Activated CD8-positive, alpha-beta T cell treated with anti-CD3 and anti-CD28 coated beads, Interleukin-2, amount 10 ng/mL, durations not matched to agents 7 days and 5 days (primary cell): ENCODE measurements at regions of chr20 and their contacts with region 1.

Region 1: DNA sequence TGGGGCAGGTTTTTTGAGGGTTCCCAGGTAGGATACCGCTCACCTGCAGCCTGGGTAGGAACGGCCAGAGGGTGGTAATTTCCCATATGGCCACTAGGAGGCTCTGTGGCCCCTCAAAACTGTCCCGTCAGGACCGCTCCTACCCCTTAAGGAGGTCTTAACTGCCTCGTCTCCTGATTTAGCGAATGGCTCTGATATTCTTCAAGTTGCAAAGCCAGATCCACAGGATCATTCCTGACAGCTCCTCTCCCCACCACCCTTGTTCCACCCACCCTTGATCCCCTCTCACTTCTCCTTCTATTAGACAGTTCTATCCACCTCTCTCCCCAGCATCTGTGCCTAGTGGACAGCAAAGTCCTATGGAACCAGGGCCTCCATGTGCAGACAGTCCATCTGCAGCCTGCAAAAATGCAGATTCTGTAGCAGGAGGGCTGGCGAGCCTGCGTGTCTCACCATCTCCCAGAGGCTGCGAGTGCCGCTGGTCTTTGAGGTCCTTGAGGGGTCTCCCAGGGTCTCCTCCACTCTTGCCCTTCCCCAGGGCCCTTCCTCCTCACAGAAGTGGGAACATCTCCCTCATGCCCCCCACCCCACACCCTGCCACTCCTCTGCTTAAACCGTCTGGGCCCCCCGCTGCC is 34.3 kb upstream of the ZBP1 start:
- DNase-seq: peak; percentile 75
- ATAC-seq: peak; percentile 72
- H3K4me3 Mint-ChIP-seq: no peak overlapping the region
- H3K27ac Mint-ChIP-seq: no peak overlapping the region
- H3K4me1 Mint-ChIP-seq: peaks cover 30% of the 10 kb centered on the region
- H3K27me3 Mint-ChIP-seq: peaks cover 4% of the 10 kb centered on the region

Region 2: GRCh38 chr20:57628047-57628961 is 26.2 kb before region 1 on chr20:
- CTCF ChIA-PET with region 1: interaction called, 75 read pairs
- POLR2A ChIA-PET with region 1: no interaction called
- DNase-seq: peak; percentile 77
- ATAC-seq: peak; percentile 90
- H3K4me3 Mint-ChIP-seq: peak overlapping the region; percentile 55
- H3K27ac Mint-ChIP-seq: peak overlapping the region; percentile 95
- H3K4me1 Mint-ChIP-seq: peaks cover 56% of the 10 kb centered on the region
- H3K27me3 Mint-ChIP-seq: peaks cover 18% of the 10 kb centered on the region

Region 3: DNA sequence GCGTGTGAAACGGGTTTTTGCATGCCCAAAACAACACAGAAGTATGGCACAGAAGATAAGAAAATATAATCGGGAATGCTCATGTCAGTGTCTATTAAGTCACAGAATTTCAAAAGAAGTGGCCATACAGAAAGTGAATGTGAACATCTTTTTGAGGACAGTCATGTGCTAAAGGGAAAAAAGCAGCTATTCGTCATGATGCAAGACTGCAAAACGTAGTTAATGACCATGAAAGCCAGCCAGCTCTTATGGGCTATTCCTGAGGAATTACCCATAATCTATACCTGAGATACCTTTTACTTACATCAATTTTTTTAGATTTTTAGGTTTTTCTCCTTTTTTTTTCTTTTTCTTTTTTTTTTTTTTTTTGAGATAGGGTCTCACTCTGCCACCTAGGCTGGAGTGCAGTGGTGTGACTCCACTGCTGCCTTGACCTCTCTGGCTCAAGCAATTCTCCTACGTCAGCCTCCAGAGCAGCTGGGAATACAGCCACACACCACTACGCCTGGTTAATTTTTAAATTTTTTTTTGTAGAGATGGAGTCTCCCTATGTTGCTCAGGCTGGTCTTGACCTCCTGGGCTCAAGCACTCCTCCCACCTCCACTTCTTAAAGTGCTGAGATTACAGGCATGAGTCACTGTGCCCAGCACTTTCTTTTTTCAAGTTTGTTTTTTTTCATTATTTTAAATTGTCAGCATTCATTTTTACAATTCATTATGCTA is 16.1 kb before region 1 on chr20:
- CTCF ChIA-PET with region 1: interaction called, 17 read pairs
- POLR2A ChIA-PET with region 1: interaction called, 4 read pairs
- DNase-seq: peak; percentile 2
- ATAC-seq: no peak
- H3K4me3 Mint-ChIP-seq: no peak overlapping the region
- H3K27ac Mint-ChIP-seq: no peak overlapping the region
- H3K4me1 Mint-ChIP-seq: peaks cover 16% of the 10 kb centered on the region
- H3K27me3 Mint-ChIP-seq: peaks cover 50% of the 10 kb centered on the region

Region 4: DNA sequence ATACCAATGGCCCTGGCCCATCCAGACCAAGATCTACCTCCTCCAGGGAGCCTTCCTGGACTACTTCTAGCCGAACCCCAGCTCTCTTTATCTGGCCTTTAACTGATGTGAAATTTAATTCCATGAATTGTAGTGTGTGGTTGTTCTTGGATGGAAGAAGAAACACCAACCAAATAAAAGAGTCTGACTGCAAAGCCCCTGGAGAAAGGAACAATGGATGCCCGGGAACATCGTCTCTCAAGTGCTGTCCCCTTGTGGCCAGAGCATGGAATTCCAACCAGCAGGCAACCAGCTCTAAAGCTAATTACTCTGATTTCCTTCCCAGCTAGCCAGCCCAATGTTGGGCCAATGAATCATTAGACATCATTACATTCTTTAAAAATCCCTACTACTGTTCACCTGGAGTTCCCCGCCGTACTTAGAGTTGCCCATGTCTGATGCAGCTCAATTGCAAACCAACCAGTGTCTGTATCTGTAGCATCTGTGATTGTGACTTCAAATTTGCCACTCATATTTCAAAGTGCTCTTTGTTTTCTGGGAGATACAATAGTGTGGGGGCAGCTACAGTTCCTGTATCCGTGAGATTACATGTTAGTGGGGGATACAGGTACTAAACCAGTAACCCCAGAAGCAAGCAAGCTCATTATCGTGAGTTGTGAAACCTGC is 432.8 kb after region 1 on chr20:
- CTCF ChIA-PET with region 1: interaction called, 14 read pairs
- POLR2A ChIA-PET with region 1: no interaction called
- DNase-seq: peak; percentile 30
- ATAC-seq: no peak
- H3K4me3 Mint-ChIP-seq: no peak overlapping the region
- H3K27ac Mint-ChIP-seq: no peak overlapping the region
- H3K4me1 Mint-ChIP-seq: no peaks in the 10 kb centered on the region
- H3K27me3 Mint-ChIP-seq: no peaks in the 10 kb centered on the region